CD4-positive, alpha-beta T cell (primary cell): ENCODE measurements at regions of chr22 and their contacts with region 1.

Region 1: DNA sequence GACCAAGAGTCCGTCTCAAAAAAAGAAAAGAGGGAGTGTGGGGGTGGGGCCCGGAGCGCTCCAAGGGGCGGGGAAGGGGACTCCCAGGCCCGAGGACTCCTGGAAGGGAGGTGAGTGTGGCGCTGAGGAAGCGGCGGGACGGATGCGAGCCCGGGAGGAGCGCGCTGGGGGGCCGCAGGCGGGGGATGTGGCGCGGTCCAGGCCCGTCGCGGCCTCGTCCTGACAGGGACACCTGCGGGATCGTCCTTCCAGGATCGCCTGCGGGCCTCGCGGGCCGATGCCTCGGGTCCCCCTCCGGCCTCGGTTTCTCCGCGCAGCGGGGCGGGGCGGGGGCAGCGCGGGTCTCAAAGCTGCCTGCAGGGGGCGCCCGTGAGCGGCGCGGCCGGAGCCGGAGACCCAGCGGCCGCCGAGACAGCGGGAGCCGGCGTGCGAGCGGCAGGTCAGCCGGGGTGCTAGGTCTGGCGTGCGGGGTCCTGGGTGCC is 3.8 kb upstream of the ADORA2A start:
- DNase-seq: peak in 13 of 14 experiments; percentile 44 to 83 (median 54)
- ATAC-seq: no peak
- H3K4me3 ChIP-seq: no peak overlapping the region
- H3K4me3 Mint-ChIP-seq: peak overlapping the region; percentile 74
- H3K27ac ChIP-seq: no peak overlapping the region
- H3K27ac Mint-ChIP-seq: peak overlapping the region; percentile 72
- H3K4me1 ChIP-seq: peaks cover 49% of the 10 kb centered on the region
- H3K4me1 Mint-ChIP-seq: peaks cover 44% of the 10 kb centered on the region
- H3K27me3 ChIP-seq: no peaks in the 10 kb centered on the region
- H3K27me3 Mint-ChIP-seq: no peaks in the 10 kb centered on the region
- CTCF ChIP-seq: peak; percentile 78

Region 2: DNA sequence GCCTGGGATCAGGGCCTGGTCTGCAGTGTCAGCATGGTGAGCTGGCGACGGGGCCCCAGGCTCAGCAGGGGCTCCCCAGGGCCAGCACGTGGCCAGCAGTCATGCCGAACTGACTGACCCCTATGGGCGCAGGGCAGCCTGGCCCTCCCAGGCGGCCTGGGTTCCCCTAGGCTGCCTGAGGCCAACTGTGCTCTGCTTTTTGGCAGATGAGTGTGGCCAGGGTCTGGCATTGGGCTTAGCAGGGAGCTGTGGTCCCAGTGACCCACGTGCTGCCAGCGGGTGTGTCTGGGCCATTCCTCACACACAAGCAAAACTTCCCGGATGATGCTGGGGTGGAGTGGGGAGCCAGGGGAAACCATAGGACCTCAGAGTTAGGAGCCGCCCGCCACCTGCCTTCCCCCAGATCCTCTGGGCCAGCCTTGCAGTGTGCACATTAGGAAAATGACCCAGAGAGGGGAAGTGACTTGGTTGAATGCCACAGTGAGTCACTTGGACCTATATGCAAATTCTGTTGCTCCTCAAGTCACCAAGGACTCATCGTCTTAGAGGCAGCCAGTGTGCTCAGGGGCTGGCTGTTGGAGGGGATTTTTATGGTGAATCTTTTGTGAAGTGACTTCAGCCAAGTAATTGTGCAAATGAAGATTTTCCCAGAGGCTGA is 10.4 kb after region 1 on chr22:
- CTCF ChIA-PET with region 1: interaction called, 17 read pairs
- POLR2A ChIA-PET with region 1: interaction called, 14 read pairs
- intact Hi-C with region 1: no loop called
- DNase-seq: peak in 4 of 14 experiments; percentile 19 to 77 (median 54)
- ATAC-seq: peak; percentile 43
- H3K4me3 ChIP-seq: no peak overlapping the region
- H3K4me3 Mint-ChIP-seq: peak overlapping the region; percentile 82
- H3K27ac ChIP-seq: peak overlapping the region; percentile 66 to 98
- H3K27ac Mint-ChIP-seq: peak overlapping the region; percentile 92
- H3K4me1 ChIP-seq: peaks cover 93% of the 10 kb centered on the region
- H3K4me1 Mint-ChIP-seq: peaks cover 93% of the 10 kb centered on the region
- H3K27me3 ChIP-seq: no peaks in the 10 kb centered on the region
- H3K27me3 Mint-ChIP-seq: no peaks in the 10 kb centered on the region
- CTCF ChIP-seq: no peak

Region 3: GRCh38 chr22:24503137-24503842 is 79.7 kb after region 1 on chr22:
- CTCF ChIA-PET with region 1: interaction called, 7 read pairs
- POLR2A ChIA-PET with region 1: interaction called, 3 read pairs
- intact Hi-C with region 1: loop called (anchors 1 to 2 kb)
- DNase-seq: peak; percentile 31 to 83 (median 52)
- ATAC-seq: peak; percentile 65
- H3K4me3 ChIP-seq: no peak overlapping the region
- H3K4me3 Mint-ChIP-seq: no peak overlapping the region
- H3K27ac ChIP-seq: no peak overlapping the region
- H3K27ac Mint-ChIP-seq: no peak overlapping the region
- H3K4me1 ChIP-seq: peaks cover 4% of the 10 kb centered on the region
- H3K4me1 Mint-ChIP-seq: peaks cover 7% of the 10 kb centered on the region
- H3K27me3 ChIP-seq: no peaks in the 10 kb centered on the region
- H3K27me3 Mint-ChIP-seq: no peaks in the 10 kb centered on the region
- CTCF ChIP-seq: peak; percentile 67

Region 4: DNA sequence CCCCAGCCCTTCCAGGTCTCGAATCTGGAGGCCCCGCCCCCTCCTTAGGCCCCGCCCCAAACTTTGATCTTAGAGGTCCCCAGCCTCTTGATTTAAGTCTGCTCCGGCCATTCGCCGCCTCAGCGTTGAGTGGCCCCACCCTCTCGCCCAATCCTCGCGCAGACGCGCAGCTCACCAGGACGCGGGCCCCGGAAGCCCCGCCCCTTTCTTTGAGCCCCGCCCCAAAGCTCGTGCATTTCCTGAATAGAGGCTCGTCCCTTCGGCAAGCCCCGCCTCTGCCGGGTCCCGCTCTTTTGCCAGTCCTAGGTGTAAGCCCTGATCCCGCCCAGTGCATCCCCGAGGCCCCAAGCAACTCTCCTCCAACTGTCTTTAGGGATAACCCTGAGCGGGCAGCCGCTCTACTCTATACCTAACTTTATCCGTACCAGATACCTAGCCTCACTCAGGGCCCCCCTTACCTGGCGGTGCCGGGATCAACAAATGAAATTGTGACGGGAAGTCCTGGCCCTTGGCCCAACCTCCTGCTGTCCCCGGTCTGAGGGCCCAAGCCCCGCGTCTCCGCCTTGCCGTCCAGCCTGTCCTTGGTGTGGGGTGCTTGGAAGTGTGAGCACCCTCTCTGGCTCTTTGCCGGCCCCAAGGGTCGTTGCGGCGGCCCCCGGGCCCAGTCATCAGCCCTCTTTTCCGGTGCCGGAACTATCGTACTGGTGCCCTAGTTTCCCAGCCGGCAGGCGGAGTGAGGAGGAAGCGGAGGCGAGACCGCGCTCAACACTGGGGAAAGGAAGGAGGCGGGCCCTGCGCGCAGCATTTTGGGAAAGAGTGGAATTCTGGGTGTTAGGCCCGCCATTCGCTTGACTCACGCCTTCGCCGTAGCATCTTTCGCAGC is 131.8 kb after region 1 on chr22 and contains the start of gene SNRPD3:
- CTCF ChIA-PET with region 1: no interaction called
- POLR2A ChIA-PET with region 1: interaction called, 17 read pairs
- intact Hi-C with region 1: no loop called
- DNase-seq: peak; percentile 99 to 100 (median 100)
- ATAC-seq: peak; percentile 83
- H3K4me3 ChIP-seq: peak within 1 kb of the TSS; percentile 78
- H3K4me3 Mint-ChIP-seq: peak within 1 kb of the TSS; percentile 97
- H3K27ac ChIP-seq: peak within 1 kb of the TSS; percentile 97 to 98
- H3K27ac Mint-ChIP-seq: peak within 1 kb of the TSS; percentile 89
- H3K4me1 ChIP-seq: peaks cover 52% of the 10 kb centered on the region
- H3K4me1 Mint-ChIP-seq: peaks cover 82% of the 10 kb centered on the region
- H3K27me3 ChIP-seq: no peaks in the 10 kb centered on the region
- H3K27me3 Mint-ChIP-seq: no peaks in the 10 kb centered on the region
- CTCF ChIP-seq: no peak
- total RNA-seq, gene SNRPD3: 31.0 to 31.5 TPM

Region 5: DNA sequence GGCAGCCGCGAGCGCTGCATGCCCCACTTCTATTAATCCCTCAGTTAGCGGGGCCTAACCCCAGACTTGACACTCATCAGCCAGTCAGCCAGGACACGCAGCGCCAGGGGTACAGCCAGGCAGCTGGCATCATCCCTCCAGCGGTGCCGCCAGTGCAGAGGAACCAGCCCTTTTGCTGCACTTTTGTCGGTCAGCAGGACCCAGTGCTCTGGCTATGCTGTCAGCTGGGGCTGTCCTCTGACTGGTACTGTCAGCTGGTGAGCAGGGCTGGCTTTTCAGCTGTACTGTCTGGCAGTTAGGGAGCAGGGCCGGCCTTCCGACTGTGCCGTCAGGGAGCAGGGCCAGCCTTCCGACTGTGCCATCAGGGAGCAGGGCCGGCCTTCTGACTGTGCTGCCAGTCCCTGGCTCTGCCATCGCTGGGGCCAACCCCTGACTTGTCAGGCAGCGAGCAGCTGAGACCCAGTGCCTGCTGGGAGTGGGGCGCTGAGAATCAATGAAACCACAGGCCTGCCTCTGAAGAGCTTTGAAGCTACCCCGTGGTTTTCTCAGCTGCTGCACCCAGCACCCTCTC is 644.4 kb after region 1 on chr22:
- CTCF ChIA-PET with region 1: no interaction called
- POLR2A ChIA-PET with region 1: no interaction called
- intact Hi-C with region 1: loop called in 1 of 2 experiments (anchors 10 kb)
- DNase-seq: peak; percentile 75 to 97 (median 86)
- ATAC-seq: peak; percentile 83
- H3K4me3 ChIP-seq: peak overlapping the region; percentile 29
- H3K4me3 Mint-ChIP-seq: peak overlapping the region; percentile 73
- H3K27ac ChIP-seq: peak overlapping the region; percentile 83 to 90
- H3K27ac Mint-ChIP-seq: peak overlapping the region; percentile 96
- H3K4me1 ChIP-seq: peaks cover 93% of the 10 kb centered on the region
- H3K4me1 Mint-ChIP-seq: peaks cover 81% of the 10 kb centered on the region
- H3K27me3 ChIP-seq: no peaks in the 10 kb centered on the region
- H3K27me3 Mint-ChIP-seq: no peaks in the 10 kb centered on the region
- CTCF ChIP-seq: no peak